Right ventricle myocardium inferior (tissue), 1 donor: ENCODE measurements at regions of chr1 and their contacts with region 1.

Region 1: GRCh38 chr1:31959521-31960340 is 21.6 kb upstream of the PTP4A2 start:
- DNase-seq: no peak
- ATAC-seq: no peak

Region 2: DNA sequence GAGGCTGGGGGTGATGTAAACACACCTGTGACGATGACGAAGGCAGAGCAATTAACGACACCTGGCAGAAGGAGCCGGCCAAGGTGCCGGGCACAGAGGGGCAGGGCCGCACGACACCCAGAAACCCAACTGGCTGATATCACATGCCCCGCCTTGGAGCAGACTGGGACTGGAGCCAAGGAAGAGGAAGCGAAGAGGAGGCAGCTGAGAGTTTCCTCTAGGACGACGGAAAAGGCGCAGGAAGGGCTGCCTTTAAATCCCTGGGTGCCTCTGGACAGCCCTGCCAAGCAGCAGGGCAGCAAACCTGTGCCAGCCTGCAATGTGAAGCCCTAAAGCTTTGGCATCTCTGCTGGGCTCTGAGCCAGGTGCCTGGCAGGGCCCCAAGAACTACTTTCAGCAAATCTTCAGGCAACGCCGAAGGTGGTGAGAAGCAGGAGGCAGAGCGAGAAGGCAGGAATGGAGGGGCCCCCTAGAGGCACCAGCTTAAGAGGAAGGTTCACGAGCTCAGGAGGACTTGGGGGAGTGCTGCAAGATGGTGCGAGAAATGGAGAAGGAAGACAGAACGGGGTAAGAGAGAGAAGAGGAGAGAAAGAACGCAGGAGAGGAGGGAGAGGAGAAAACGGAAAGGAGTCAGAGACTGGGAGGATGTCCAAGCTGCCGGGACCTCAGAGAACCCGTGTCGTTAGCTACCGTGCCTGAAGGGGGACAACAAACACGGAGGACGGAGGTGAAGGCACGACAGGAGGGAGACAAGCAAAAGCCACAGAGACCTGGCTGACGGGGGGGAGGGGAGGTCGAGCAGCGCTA is 289.7 kb before region 1 on chr1:
- intact Hi-C with region 1: loop called (anchors 5 kb)
- DNase-seq: peak; percentile 72
- ATAC-seq: peak; percentile 70

Region 3: DNA sequence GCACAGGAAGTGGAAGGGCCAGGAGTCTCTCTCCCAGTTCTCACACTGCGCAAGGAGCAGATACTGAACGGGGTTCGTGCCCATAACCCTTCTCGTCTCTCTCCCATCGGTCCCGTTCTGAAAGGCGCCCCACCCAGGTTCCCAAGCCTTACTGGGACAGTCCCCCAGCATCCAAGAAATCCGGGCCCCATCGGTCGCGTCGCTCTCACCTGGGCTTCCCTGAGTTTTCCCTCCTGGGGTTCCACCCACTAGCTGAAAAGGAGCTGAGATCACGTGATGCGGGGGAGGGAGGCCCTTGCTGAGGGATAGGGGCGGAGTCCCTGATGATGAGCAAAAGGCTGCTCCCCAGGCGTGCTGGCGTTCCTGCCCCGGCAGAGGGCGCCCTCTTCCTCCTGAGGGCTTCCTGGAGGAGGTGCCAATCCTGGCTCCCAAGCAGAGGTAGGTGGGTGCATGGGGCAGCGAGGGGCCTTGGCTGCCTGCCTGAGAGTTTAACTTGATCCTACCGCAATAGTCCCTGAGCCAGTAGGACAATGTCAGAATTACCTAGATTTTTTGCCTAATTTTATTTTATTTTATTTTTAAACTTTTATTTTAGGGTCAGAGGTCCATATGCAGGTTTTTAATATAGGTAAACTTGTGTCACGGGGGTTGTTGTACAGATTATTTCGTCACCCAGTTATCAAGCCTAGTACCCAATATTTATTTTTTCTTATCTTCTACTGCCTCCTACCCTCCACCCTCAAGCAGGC is 143.8 kb before region 1 on chr1 and contains the start of gene SPOCD1:
- intact Hi-C with region 1: loop called (anchors 5 kb)
- DNase-seq: peak; percentile 90
- ATAC-seq: peak; percentile 73
- total RNA-seq, gene SPOCD1: not detected

Region 4: DNA sequence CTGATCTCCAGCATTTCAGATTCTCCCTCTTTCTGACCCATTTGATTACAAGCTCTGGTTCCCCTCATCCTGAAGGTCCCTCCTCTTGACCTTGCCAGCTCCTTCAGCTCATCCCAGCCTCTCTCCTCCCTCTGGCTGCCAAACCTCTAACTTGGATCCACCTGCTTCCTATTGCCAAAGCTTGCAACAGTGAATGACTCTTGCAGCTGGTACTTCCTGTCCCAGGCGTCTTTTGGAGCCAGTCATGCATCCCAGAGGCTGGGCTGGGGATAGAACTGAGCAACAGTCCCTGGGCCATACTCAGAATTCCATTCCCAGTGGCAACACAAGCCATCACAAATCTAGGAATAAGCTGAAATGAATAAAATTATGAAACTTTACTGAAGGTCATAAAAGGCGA is 116.2 kb before region 1 on chr1:
- intact Hi-C with region 1: no loop called
- DNase-seq: no peak
- ATAC-seq: no peak

Region 5: GRCh38 chr1:31880890-31881687 is 78.6 kb before region 1 on chr1:
- intact Hi-C with region 1: loop called (anchors 5 kb)
- DNase-seq: no peak
- ATAC-seq: no peak

Region 6: GRCh38 chr1:31926853-31927660 is 32.7 kb before region 1 on chr1:
- intact Hi-C with region 1: loop called (anchors 5 kb)
- DNase-seq: no peak
- ATAC-seq: no peak